Activated CD4-positive, alpha-beta T cell treated with anti-CD3 and anti-CD28 coated beads for 36 hours (primary cell): ENCODE measurements at regions of chr10 and their contacts with region 1.

Region 1: GRCh38 chr10:101042667-101043355 is 11.8 kb downstream of the SFXN3 start:
- DNase-seq: peak; percentile 96
- ATAC-seq: peak; percentile 96
- H3K4me3 Mint-ChIP-seq: peak overlapping the region; percentile 79
- H3K27ac Mint-ChIP-seq: peak overlapping the region; percentile 79
- H3K4me1 Mint-ChIP-seq: peaks cover 21% of the 10 kb centered on the region
- H3K27me3 Mint-ChIP-seq: peaks cover 14% of the 10 kb centered on the region

Region 2: DNA sequence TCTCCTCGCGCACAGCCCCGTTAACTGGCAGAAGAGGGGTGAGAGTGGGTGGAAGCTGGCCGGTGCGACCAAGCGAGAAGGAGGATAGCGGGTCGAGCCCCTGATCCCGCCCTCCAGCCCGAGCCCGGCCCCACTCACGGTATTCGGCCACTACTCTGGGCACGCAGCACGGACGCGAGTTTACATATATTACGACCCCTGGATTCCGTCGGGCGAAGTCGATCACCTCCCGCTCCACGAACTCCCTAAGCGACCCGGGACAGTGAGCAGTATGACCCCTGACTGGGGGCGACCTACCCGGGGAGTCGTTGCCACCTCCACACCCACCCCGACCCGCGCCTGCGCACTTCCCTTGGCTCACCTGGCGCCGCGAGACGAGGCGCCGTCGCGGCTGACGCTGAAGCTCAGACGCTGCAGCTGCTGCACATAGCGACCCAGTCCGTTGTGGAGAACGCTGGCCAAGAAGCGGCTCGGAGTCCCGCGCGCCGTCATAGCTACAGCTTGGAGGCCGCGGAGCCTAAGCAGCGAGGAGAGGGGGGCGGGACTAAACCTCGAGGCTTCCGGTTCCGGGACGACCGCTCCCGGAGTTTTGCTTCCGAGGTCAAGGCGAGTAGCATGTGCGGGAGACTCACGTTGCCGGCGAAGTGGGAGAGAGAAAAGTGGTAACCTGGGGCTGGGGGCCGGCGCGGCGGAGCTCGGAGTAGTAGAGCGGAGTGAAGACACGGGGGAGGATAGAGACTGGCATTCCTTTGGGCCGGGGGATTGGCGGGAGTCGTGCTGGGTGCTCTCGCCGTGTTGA is 55.7 kb before region 1 on chr10 and contains the starts of genes MRPL43 and TWNK:
- CTCF ChIA-PET with region 1: interaction called, 5 read pairs
- POLR2A ChIA-PET with region 1: no interaction called
- intact Hi-C with region 1: loop called in 1 of 2 experiments (anchors 1 kb)
- DNase-seq: peak; percentile 93
- ATAC-seq: peak; percentile 98
- H3K4me3 Mint-ChIP-seq: peak within 1 kb of the TSS; percentile 100
- H3K27ac Mint-ChIP-seq: peak within 1 kb of the TSS; percentile 94
- H3K4me1 Mint-ChIP-seq: peaks cover 43% of the 10 kb centered on the region
- H3K27me3 Mint-ChIP-seq: no peaks in the 10 kb centered on the region
- total RNA-seq, gene MRPL43: 53.4 to 62.6 TPM
- total RNA-seq, gene TWNK: 13.8 to 17.9 TPM

Region 3: GRCh38 chr10:101018600-101019439 is 24.0 kb before region 1 on chr10:
- CTCF ChIA-PET with region 1: interaction called, 20 read pairs
- POLR2A ChIA-PET with region 1: interaction called, 3 read pairs
- intact Hi-C with region 1: no loop called
- DNase-seq: peak; percentile 93
- ATAC-seq: peak; percentile 87
- H3K4me3 Mint-ChIP-seq: no peak overlapping the region
- H3K27ac Mint-ChIP-seq: no peak overlapping the region
- H3K4me1 Mint-ChIP-seq: peaks cover 12% of the 10 kb centered on the region
- H3K27me3 Mint-ChIP-seq: peaks cover 37% of the 10 kb centered on the region

Region 4: DNA sequence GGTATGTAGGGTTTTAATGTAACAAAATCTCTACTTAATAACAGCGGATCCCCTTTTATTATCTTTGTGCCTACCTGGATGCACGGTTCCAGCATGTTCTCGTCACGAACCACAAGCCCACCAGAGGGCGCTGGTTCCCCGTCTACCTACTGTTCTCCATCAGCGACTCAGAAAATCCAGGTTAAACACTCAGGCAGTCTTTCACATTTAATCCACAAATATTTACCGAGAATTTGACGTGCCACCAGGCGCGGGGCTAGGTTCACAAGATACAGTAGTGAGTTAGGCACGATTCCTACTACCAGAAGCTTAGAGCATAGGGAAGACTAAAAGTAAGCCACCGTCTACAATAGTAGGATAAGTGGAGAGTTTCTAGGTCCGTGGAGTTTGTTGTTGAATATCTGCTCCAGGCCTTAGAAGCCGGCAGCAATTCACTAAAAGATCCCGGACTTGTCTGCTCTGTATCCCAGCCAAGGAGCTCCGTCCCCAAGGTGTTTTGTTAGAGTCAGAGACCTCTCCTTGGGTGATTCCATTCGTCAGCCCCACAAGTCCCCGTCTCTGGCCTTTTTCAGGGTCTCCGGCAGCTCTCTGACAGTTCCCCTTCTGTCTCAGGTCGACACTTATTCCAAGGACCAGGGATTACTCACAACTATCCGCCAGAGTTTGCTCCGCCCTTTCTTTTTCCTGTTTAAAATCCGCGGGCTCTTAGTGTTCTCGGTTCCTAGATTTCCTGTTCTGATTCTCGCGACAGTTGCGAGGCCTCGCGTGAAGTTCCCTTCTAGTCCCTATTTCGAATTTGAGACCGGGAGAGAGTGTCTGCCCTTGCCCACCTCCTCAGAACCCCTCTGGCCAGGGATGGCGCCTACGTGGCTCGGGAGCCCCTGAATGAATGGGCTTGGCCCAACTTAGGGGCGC is 17.5 kb after region 1 on chr10:
- CTCF ChIA-PET with region 1: interaction called, 526 read pairs
- POLR2A ChIA-PET with region 1: interaction called, 6 read pairs
- intact Hi-C with region 1: loop called (anchors 1 kb)
- DNase-seq: peak; percentile 95
- ATAC-seq: peak; percentile 75
- H3K4me3 Mint-ChIP-seq: peak overlapping the region; percentile 82
- H3K27ac Mint-ChIP-seq: peak overlapping the region; percentile 96
- H3K4me1 Mint-ChIP-seq: peaks cover 22% of the 10 kb centered on the region
- H3K27me3 Mint-ChIP-seq: peaks cover 22% of the 10 kb centered on the region

Region 5: DNA sequence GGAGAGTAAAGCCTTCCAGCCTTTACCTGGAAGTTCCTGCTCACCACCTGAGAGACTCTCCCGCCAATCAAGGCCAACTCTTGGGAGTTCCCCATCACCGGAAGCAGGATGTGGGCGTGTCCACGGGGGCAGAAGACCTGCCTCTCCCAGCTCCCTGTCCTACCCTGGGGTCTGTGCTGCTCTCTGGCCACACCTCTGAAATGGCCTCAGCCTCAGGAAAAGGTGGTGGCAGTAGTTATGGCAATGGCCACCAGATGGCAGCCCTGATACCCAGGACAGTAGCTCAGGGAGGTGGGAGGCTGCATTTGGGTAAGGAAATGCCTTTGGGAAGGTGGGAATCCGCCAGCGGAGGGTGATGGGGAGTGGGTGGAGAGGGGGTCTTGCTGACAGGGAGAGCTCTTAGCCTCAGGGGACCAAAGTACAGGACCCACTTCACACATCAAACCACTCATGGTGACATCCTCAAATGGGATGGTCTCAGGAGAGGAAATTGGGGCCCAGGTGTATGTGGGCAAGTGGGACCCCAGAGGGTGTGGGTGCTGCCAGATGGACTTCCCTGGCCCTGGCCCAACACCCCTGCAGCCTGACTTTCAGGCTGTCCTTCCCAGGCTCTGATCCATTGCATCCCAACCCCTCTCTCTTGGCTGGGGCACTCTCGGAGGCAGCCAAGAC is 52.9 kb after region 1 on chr10:
- CTCF ChIA-PET with region 1: interaction called, 12 read pairs
- POLR2A ChIA-PET with region 1: no interaction called
- intact Hi-C with region 1: no loop called
- DNase-seq: peak; percentile 86
- ATAC-seq: peak; percentile 100
- H3K4me3 Mint-ChIP-seq: no peak overlapping the region
- H3K27ac Mint-ChIP-seq: no peak overlapping the region
- H3K4me1 Mint-ChIP-seq: no peaks in the 10 kb centered on the region
- H3K27me3 Mint-ChIP-seq: peaks cover 27% of the 10 kb centered on the region

Region 6: GRCh38 chr10:101110856-101111546 is 68.2 kb after region 1 on chr10:
- CTCF ChIA-PET with region 1: no interaction called
- POLR2A ChIA-PET with region 1: no interaction called
- intact Hi-C with region 1: no loop called
- DNase-seq: no peak
- ATAC-seq: no peak
- H3K4me3 Mint-ChIP-seq: no peak overlapping the region
- H3K27ac Mint-ChIP-seq: no peak overlapping the region
- H3K4me1 Mint-ChIP-seq: no peaks in the 10 kb centered on the region
- H3K27me3 Mint-ChIP-seq: peaks cover 23% of the 10 kb centered on the region